ENCODE measurements at regions of chr6 and their contacts with region 1.

Region 1: GRCh38 chr6:36027501-36028087 is at the start of gene MAPK14:
- DNase-seq: peak; percentile 91 to 100 (median 99)
- ATAC-seq: peak; percentile 95
- H3K4me3 ChIP-seq: peak within 1 kb of the TSS; percentile 63
- H3K4me3 Mint-ChIP-seq: peak within 1 kb of the TSS; percentile 91 to 100 (median 94)
- H3K27ac ChIP-seq: peak within 1 kb of the TSS; percentile 85
- H3K27ac Mint-ChIP-seq: peak within 1 kb of the TSS; percentile 87 to 95 (median 92)
- H3K4me1 ChIP-seq: peaks cover 16 to 23% of the 10 kb centered on the region in 2 donors
- H3K4me1 Mint-ChIP-seq: peaks cover 27 to 55% (median 43%) of the 10 kb centered on the region in 7 donors
- H3K27me3 ChIP-seq: no peaks in the 10 kb centered on the region
- H3K27me3 Mint-ChIP-seq: peaks cover 19 to 35% (median 24%) of the 10 kb centered on the region in 5 donors
- total RNA-seq, gene MAPK14: 47.2 to 81.0 (median 62.6) TPM

Region 2: GRCh38 chr6:34392497-34393190 is 1635.0 kb before region 1 on chr6 and contains the start of gene NUDT3:
- CTCF ChIA-PET with region 1: no interaction called
- POLR2A ChIA-PET with region 1: no interaction called
- intact Hi-C with region 1: loop called in 1 of 2 experiments (anchors 5 kb)
- DNase-seq: peak; percentile 88 to 98 (median 93)
- ATAC-seq: peak; percentile 93
- H3K4me3 ChIP-seq: peak within 1 kb of the TSS; percentile 92
- H3K4me3 Mint-ChIP-seq: peak within 1 kb of the TSS in 4 of 10 donors; percentile 79 to 99 (median 98)
- H3K27ac ChIP-seq: peak within 1 kb of the TSS; percentile 85
- H3K27ac Mint-ChIP-seq: peak within 1 kb of the TSS in 8 of 9 donors; percentile 89 to 95 (median 92)
- H3K4me1 ChIP-seq: peaks cover 11 to 16% of the 10 kb centered on the region in 2 donors
- H3K4me1 Mint-ChIP-seq: peaks cover 0 to 28% (median 23%) of the 10 kb centered on the region in 7 donors
- H3K27me3 ChIP-seq: no peaks in the 10 kb centered on the region
- H3K27me3 Mint-ChIP-seq: peaks cover 0 to 2% (median 0%) of the 10 kb centered on the region in 5 donors
- total RNA-seq, gene NUDT3: 16.2 to 29.7 (median 25.4) TPM

Region 3: DNA sequence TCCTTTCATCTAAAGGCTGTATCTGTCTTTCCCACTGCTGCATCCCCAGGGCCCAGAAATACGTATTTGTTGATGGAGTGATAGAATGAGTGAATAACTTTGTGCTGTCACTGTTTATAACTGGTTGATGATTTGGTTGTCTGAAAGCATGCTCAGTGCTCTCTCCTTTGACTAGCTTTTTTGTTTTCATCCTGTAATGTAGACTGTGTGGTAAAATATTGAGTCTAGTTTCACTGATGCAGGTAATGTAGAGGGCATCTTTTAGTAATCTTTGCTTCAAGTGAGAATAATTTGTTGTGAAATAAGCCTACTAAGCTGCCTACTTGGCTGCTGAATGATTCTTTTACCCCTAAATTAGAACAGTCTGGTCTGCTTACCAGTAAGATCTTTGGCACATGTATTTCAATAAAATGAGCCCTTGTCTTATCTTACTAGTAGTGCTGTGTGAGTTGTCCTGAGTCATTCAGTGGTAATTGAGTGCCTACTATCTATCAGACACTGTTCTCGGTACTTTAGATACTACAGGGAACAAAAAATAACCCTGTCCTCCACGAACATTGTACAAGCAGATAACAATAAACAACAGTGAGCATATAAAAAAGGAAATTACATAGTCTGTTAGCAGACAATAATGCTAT is 39.9 kb after region 1 on chr6:
- CTCF ChIA-PET with region 1: interaction called, 10 read pairs
- POLR2A ChIA-PET with region 1: no interaction called
- intact Hi-C with region 1: no loop called
- DNase-seq: no peak
- ATAC-seq: peak; percentile 37
- H3K4me3 ChIP-seq: no peak overlapping the region
- H3K4me3 Mint-ChIP-seq: no peak overlapping the region
- H3K27ac ChIP-seq: no peak overlapping the region
- H3K27ac Mint-ChIP-seq: peak overlapping the region in 8 of 9 donors; percentile 4 to 79 (median 54)
- H3K4me1 ChIP-seq: peaks cover 0 to 7% of the 10 kb centered on the region in 2 donors
- H3K4me1 Mint-ChIP-seq: peaks cover 41 to 90% (median 77%) of the 10 kb centered on the region in 7 donors
- H3K27me3 ChIP-seq: no peaks in the 10 kb centered on the region
- H3K27me3 Mint-ChIP-seq: no peaks in the 10 kb centered on the region

Region 4: GRCh38 chr6:36109092-36109491 is 81.5 kb after region 1 on chr6:
- CTCF ChIA-PET with region 1: interaction called, 6 read pairs
- POLR2A ChIA-PET with region 1: interaction called, 18 read pairs
- intact Hi-C with region 1: no loop called
- DNase-seq: peak in 7 of 9 donors; percentile 70 to 90 (median 84)
- ATAC-seq: peak; percentile 95
- H3K4me3 ChIP-seq: no peak overlapping the region
- H3K4me3 Mint-ChIP-seq: peak overlapping the region; percentile 34 to 67 (median 51)
- H3K27ac ChIP-seq: peak overlapping the region; percentile 69
- H3K27ac Mint-ChIP-seq: peak overlapping the region; percentile 75 to 98 (median 96)
- H3K4me1 ChIP-seq: peaks cover 27 to 46% of the 10 kb centered on the region in 2 donors
- H3K4me1 Mint-ChIP-seq: peaks cover 27 to 78% (median 54%) of the 10 kb centered on the region in 7 donors
- H3K27me3 ChIP-seq: no peaks in the 10 kb centered on the region
- H3K27me3 Mint-ChIP-seq: no peaks in the 10 kb centered on the region

Region 5: DNA sequence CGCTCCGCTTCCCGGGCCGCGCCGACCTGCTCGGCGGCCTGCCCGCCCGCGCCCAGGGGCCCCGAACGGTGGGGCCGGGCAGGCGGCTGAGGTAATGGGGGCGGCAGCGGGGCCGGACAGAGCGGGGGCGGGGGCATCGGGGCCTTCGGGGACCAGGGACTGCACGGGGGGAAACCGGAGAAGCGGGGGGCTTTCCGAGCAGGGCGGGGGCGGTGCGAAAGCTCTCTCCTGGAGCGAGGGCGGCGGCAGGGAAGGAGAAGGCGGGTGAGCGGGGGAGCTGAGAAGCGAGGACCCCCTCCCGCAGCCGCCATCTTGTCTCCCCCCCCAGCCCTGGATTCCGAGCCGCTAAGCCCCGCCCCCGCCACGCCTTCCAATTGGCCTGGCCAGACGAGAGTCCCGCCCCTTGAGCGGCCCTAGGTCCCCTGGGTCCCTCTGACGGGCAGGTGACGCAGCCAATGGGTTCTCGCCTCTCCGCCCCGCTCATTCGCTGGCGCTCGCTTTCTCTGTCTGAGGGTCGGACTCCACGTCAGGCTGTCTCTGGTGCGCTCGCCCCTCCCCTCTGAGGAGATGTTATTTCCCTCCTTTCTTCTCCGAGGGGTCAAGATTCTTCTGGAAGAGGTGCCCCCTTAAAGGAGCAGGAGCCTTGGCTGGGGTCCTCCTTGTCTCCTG is 169.4 kb after region 1 on chr6:
- CTCF ChIA-PET with region 1: interaction called, 10 read pairs
- POLR2A ChIA-PET with region 1: interaction called, 17 read pairs
- intact Hi-C with region 1: loop called (anchors 1 kb)
- DNase-seq: peak; percentile 94 to 100 (median 98)
- ATAC-seq: peak; percentile 96
- H3K4me3 ChIP-seq: peak overlapping the region; percentile 81
- H3K4me3 Mint-ChIP-seq: peak overlapping the region; percentile 88 to 95 (median 92)
- H3K27ac ChIP-seq: peak overlapping the region; percentile 84
- H3K27ac Mint-ChIP-seq: peak overlapping the region; percentile 69 to 96 (median 92)
- H3K4me1 ChIP-seq: peaks cover 33 to 36% of the 10 kb centered on the region in 2 donors
- H3K4me1 Mint-ChIP-seq: peaks cover 19 to 59% (median 47%) of the 10 kb centered on the region in 7 donors
- H3K27me3 ChIP-seq: no peaks in the 10 kb centered on the region
- H3K27me3 Mint-ChIP-seq: peaks cover 0 to 3% (median 0%) of the 10 kb centered on the region in 5 donors

Region 6: GRCh38 chr6:36594029-36594815 is 566.6 kb after region 1 on chr6 and contains the start of gene SRSF3:
- CTCF ChIA-PET with region 1: no interaction called
- POLR2A ChIA-PET with region 1: interaction called, 3 read pairs
- intact Hi-C with region 1: loop called in 1 of 2 experiments (anchors 5 kb)
- DNase-seq: peak; percentile 87 to 99 (median 97)
- ATAC-seq: peak; percentile 95
- H3K4me3 ChIP-seq: peak within 1 kb of the TSS; percentile 85
- H3K4me3 Mint-ChIP-seq: peak within 1 kb of the TSS; percentile 90 to 99 (median 97)
- H3K27ac ChIP-seq: peak within 1 kb of the TSS; percentile 98
- H3K27ac Mint-ChIP-seq: peak within 1 kb of the TSS; percentile 97 to 100 (median 99)
- H3K4me1 ChIP-seq: peaks cover 23 to 34% of the 10 kb centered on the region in 2 donors
- H3K4me1 Mint-ChIP-seq: peaks cover 23 to 50% (median 39%) of the 10 kb centered on the region in 7 donors
- H3K27me3 ChIP-seq: no peaks in the 10 kb centered on the region
- H3K27me3 Mint-ChIP-seq: peaks cover 0 to 3% (median 0%) of the 10 kb centered on the region in 5 donors
- total RNA-seq, gene SRSF3: 317 to 510 (median 426) TPM

Region 7: DNA sequence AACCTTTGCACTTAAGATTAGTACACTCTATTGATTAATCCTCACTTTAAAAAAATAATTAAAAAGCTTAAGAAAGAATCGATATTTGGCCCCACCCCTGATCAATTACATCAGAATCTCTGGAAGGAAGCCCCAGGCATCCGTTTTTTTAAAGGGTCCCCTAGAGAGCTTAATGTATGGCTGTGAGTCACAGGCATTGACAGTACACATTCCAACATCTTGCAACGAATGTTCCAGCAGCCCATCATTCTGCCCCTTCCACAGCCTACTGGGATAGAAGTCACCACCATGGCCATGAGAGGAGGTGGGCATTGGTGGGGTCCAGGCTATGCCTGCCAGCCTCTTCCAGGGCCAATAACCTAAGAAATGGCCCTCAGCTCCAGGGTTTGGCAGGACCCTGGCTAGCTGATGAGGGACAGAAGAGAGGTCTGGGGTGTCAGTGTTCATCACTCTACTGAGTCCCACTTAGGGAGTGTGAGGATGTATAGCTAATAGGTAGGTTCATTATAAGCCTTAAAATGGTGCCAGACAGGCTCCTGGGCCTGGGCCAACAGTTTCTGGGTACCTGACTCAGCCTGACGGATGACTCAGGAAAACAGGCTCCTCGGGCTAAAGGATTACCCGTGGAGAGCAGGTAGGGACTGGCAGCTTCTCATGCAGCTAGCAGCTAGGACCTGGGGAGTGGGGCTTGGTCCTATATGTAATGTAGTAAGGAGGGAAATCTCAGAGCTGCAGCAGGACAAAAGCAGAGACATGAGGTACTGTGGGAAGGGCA is 1629.7 kb after region 1 on chr6:
- CTCF ChIA-PET with region 1: no interaction called
- POLR2A ChIA-PET with region 1: no interaction called
- intact Hi-C with region 1: no loop called
- DNase-seq: no peak
- ATAC-seq: no peak
- H3K4me3 ChIP-seq: no peak overlapping the region
- H3K4me3 Mint-ChIP-seq: no peak overlapping the region
- H3K27ac ChIP-seq: no peak overlapping the region
- H3K27ac Mint-ChIP-seq: no peak overlapping the region
- H3K4me1 ChIP-seq: no peaks in the 10 kb centered on the region
- H3K4me1 Mint-ChIP-seq: peaks cover 0 to 10% (median 1%) of the 10 kb centered on the region in 7 donors
- H3K27me3 ChIP-seq: no peaks in the 10 kb centered on the region
- H3K27me3 Mint-ChIP-seq: peaks cover 0 to 19% (median 10%) of the 10 kb centered on the region in 5 donors

Measured in naive thymus-derived CD4-positive, alpha-beta T cell (primary cell).